ENCODE measurements at regions of chr3 and their contacts with region 1.

Region 1: DNA sequence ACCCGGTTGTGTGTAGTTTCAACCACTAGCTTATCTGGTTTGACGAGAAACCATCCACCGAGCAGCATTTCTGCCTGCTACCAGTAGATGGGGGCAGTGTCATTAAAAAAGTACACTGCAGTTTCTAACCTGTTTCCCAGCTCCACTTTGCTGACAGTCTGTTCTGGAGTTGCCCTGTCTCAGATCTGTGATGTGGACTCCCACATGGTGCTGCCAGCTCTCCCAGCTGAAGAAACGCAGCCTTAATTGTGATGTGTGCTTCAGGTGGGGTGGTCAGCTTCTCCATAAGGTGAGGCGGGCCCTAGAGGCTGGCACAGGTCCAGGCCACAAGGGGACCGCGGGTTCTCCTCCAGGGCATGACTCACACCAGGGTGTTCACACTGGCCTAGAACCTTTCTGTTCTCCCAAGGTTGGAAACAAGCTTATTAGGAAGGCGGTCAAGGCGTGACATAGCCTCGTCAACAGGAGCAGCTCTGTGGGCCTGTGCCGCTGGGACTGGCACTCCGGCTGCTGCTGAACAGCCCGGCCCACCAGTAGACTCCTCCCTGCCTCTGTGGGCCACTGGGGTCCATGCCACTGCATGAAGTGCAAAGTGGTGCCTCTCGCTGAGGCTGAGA is 2.9 kb upstream of the FAM43A start:
- DNase-seq: peak; percentile 67 to 75 (median 71)
- ATAC-seq: peak; percentile 41 to 79 (median 61)
- H3K4me3 ChIP-seq: no peak overlapping the region
- H3K27ac ChIP-seq: peak overlapping the region in 8 of 12 donors; percentile 5 to 61 (median 40)
- H3K4me1 ChIP-seq: peaks cover 4 to 34% (median 22%) of the 10 kb centered on the region in 12 donors
- H3K27me3 ChIP-seq: no peaks in the 10 kb centered on the region
- CTCF ChIP-seq: peak; percentile 74 to 96 (median 88)
- POLR2A ChIP-seq: no peak

Region 2: GRCh38 chr3:194769020-194769643 is 86.3 kb after region 1 on chr3:
- intact Hi-C with region 1: loop called in 6 of 10 experiments (anchors 1 to 5 kb)
- DNase-seq: peak; percentile 91 to 97 (median 92)
- ATAC-seq: peak; percentile 98 to 99 (median 99)
- H3K4me3 ChIP-seq: peak overlapping the region in 10 of 12 donors; percentile 26 to 60 (median 45)
- H3K27ac ChIP-seq: peak overlapping the region in 10 of 12 donors; percentile 6 to 66 (median 49)
- H3K4me1 ChIP-seq: peaks cover 0 to 45% (median 18%) of the 10 kb centered on the region in 12 donors
- H3K27me3 ChIP-seq: no peaks in the 10 kb centered on the region
- CTCF ChIP-seq: peak in 1 of 12 donors; percentile 4
- POLR2A ChIP-seq: no peak

Region 3: GRCh38 chr3:194879991-194880939 is 197.5 kb after region 1 on chr3:
- intact Hi-C with region 1: loop called in 7 of 10 experiments (anchors 5 to 10 kb)
- DNase-seq: peak; percentile 77 to 86 (median 82)
- ATAC-seq: peak; percentile 44 to 83 (median 72)
- H3K4me3 ChIP-seq: no peak overlapping the region
- H3K27ac ChIP-seq: peak overlapping the region; percentile 54 to 90 (median 81)
- H3K4me1 ChIP-seq: peaks cover 5 to 82% (median 50%) of the 10 kb centered on the region in 12 donors
- H3K27me3 ChIP-seq: no peaks in the 10 kb centered on the region
- CTCF ChIP-seq: no peak
- POLR2A ChIP-seq: no peak

Region 4: GRCh38 chr3:194985031-194985578 is 302.3 kb after region 1 on chr3:
- intact Hi-C with region 1: loop called in 6 of 10 experiments (anchors 1 to 10 kb)
- DNase-seq: peak; percentile 69 to 92 (median 80)
- ATAC-seq: peak; percentile 82 to 96 (median 91)
- H3K4me3 ChIP-seq: peak overlapping the region in 10 of 12 donors; percentile 20 to 46 (median 36)
- H3K27ac ChIP-seq: peak overlapping the region in 4 of 12 donors; percentile 1 to 55 (median 31)
- H3K4me1 ChIP-seq: peaks cover 0 to 15% (median 13%) of the 10 kb centered on the region in 12 donors
- H3K27me3 ChIP-seq: no peaks in the 10 kb centered on the region
- CTCF ChIP-seq: peak; percentile 19 to 61 (median 46)
- POLR2A ChIP-seq: no peak

Region 5: DNA sequence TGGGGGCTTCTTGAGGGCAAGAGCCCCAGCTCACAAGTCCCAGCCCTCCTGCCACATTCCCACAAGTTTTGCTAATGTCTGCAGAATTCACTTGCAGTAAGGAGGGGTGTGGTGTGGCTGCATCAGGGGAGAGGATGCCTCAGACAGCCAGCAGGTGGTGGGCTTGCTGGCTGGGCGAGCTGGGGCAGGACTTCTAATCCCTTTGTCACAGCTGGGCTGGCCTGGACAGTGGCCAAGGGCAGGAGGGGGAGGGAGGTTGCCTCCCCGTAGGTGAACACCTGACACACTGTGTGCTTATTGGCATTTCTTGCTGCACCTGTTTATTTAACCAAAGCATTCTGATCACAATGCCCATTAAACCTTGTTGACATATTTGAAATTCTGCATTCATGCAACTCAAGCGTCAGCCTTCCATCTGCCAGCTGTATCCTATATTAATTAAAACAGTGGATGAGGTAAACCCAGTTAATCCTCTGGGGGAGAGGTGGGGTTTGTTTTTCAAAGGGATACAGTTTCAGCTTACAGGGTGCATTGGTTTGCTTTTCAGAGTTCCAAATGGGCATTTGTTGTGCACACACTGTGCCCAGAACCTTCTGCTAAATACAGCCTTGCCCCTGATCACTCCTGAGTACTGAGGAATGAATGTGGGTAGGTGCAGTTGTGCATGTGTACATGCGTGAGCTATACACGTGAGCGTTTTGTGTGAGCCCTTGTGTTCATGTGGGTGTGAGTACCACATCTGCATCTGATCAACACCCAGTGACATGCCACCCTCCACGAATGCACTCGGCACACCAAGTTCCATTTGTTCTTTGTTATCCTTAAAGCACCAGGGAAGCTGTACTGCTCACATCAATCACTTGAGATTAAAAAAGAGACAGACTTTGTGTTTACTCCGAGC is 319.4 kb after region 1 on chr3:
- intact Hi-C with region 1: loop called in 3 of 10 experiments (anchors 5 to 10 kb)
- DNase-seq: peak; percentile 66 to 83 (median 68)
- ATAC-seq: peak; percentile 71 to 82 (median 72)
- H3K4me3 ChIP-seq: peak overlapping the region in 1 of 12 donors; percentile 7
- H3K27ac ChIP-seq: peak overlapping the region in 10 of 12 donors; percentile 3 to 71 (median 33)
- H3K4me1 ChIP-seq: peaks cover 0 to 28% (median 16%) of the 10 kb centered on the region in 12 donors
- H3K27me3 ChIP-seq: no peaks in the 10 kb centered on the region
- CTCF ChIP-seq: peak; percentile 34 to 74 (median 68)
- POLR2A ChIP-seq: no peak

Region 6: GRCh38 chr3:195059006-195059350 is 376.2 kb after region 1 on chr3:
- intact Hi-C with region 1: no loop called
- DNase-seq: peak in 4 of 5 donors; percentile 54 to 71 (median 64)
- ATAC-seq: peak; percentile 43 to 89 (median 51)
- H3K4me3 ChIP-seq: no peak overlapping the region
- H3K27ac ChIP-seq: peak overlapping the region in 1 of 12 donors; percentile 22
- H3K4me1 ChIP-seq: peaks cover 0 to 26% (median 12%) of the 10 kb centered on the region in 12 donors
- H3K27me3 ChIP-seq: no peaks in the 10 kb centered on the region
- CTCF ChIP-seq: no peak
- POLR2A ChIP-seq: no peak

Region 7: GRCh38 chr3:195106418-195106906 is 423.7 kb after region 1 on chr3:
- intact Hi-C with region 1: loop called (anchors 1 to 5 kb)
- DNase-seq: peak; percentile 73 to 88 (median 75)
- ATAC-seq: peak in 3 of 4 donors; percentile 70 to 79 (median 77)
- H3K4me3 ChIP-seq: peak overlapping the region in 6 of 12 donors; percentile 20 to 42 (median 27)
- H3K27ac ChIP-seq: peak overlapping the region in 1 of 12 donors; percentile 30
- H3K4me1 ChIP-seq: peaks cover 2 to 45% (median 18%) of the 10 kb centered on the region in 12 donors
- H3K27me3 ChIP-seq: no peaks in the 10 kb centered on the region
- CTCF ChIP-seq: peak; percentile 99 to 100 (median 100)
- POLR2A ChIP-seq: no peak

Region 8: DNA sequence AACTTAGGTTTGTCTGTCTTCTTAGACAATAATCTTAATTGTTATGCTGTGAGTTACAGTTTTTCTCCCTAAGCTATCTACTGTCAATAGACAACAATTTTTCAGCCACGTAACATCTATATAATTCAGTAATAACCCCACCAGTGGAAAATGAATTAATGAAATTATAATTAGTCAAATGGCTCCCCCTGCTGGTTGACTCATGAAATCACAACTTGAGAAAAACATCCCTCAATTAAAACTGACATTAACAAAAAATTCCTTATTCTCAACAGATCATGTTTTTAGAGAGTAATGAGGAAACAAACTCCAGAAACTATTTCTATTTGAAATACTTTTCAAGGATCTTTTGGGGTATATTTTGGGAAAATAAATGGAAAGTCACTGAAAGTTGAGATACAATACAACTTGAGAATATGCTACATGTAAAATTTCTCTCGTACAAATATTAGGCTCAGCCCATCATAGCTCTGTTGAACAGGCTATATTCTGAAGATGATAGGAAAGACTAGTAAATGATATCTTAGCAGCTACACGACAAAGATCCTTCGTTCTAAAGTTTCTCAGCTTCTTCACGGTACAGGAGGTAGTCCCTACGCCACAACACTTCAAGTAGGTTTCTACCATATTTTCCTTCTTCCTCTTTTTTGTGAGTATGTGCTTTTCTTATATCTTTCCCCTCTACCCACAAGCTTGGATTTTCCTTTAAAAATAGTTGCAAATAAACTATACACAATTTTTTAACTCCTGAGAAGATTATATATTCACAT is 839.6 kb after region 1 on chr3:
- intact Hi-C with region 1: loop called in 4 of 10 experiments (anchors 5 to 10 kb)
- DNase-seq: no peak
- ATAC-seq: no peak
- H3K4me3 ChIP-seq: no peak overlapping the region
- H3K27ac ChIP-seq: no peak overlapping the region
- H3K4me1 ChIP-seq: peaks cover 0 to 6% (median 0%) of the 10 kb centered on the region in 12 donors
- H3K27me3 ChIP-seq: no peaks in the 10 kb centered on the region
- CTCF ChIP-seq: peak; percentile 69 to 93 (median 78)
- POLR2A ChIP-seq: no peak

Measured in heart left ventricle (tissue), 16 donors.